ENCODE measurements at regions of chr12 and their contacts with region 1.

Region 1: DNA sequence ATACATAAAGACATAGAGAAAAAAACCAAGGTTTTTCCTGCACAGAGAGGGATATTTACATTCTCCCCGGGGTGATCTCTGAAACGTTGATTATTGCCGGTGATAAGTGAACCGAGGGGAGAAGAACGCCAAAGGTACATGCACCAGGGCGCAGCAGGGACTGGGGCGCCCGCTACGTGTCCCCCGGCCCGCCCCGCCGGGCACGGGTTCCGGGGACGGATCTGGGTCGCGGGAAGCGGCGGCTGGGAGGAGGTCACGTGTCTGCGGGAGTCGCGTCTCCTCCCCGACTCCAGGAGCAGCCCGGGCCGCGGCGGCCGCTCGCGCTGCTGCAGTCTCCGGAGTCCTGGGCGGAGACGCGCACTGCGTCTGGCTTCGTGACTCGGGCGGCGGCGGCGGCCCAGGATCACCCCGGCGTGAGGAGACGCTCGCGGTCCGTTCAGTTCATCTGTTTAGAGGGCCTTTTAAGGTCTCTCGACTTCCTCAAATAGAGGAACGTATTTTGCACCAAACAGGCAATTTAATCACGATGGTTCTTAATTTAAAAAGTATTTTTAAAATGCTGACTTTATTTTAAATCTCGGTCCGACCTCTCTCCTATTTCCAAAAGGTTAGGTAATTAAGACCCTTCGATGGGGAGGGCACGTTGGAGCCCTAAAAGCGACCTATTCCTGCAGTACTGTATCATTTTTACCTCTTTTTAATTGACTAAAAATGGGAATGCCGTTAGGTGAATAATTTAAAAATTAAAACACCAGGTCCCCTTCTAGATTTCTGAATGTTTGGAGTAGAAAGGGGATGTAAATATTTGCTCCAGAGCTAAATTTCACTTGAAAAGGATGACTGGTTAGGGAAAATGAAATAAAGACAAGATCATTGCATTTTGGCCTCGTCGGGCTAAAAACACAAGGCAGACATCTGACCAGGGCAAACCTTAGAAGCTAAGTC is 1.8 kb upstream of the BHLHE41 start:
- DNase-seq: peak; percentile 90 to 95 (median 91)
- ATAC-seq: peak; percentile 62 to 85 (median 80)
- H3K4me3 ChIP-seq: peak overlapping the region; percentile 38 to 84 (median 68)
- H3K27ac ChIP-seq: peak overlapping the region; percentile 76 to 98 (median 95)
- H3K4me1 ChIP-seq: peaks cover 0 to 26% (median 11%) of the 10 kb centered on the region in 12 donors
- H3K27me3 ChIP-seq: peaks cover 0 to 42% (median 0%) of the 10 kb centered on the region in 9 donors
- CTCF ChIP-seq: peak in 2 of 12 donors; percentile 29 to 31
- POLR2A ChIP-seq: no peak

Region 2: GRCh38 chr12:25979563-25979962 is 147.0 kb before region 1 on chr12:
- intact Hi-C with region 1: no loop called
- DNase-seq: no peak
- ATAC-seq: no peak
- H3K4me3 ChIP-seq: no peak overlapping the region
- H3K27ac ChIP-seq: no peak overlapping the region
- H3K4me1 ChIP-seq: peaks cover 0 to 60% (median 28%) of the 10 kb centered on the region in 12 donors
- H3K27me3 ChIP-seq: no peaks in the 10 kb centered on the region
- CTCF ChIP-seq: no peak
- POLR2A ChIP-seq: no peak

Region 3: GRCh38 chr12:26153421-26154154 is 27.0 kb after region 1 on chr12:
- intact Hi-C with region 1: loop called in 1 of 10 experiments (anchors 1 kb)
- DNase-seq: peak in 4 of 5 donors; percentile 15 to 46 (median 29)
- ATAC-seq: peak; percentile 88 to 98 (median 92)
- H3K4me3 ChIP-seq: no peak overlapping the region
- H3K27ac ChIP-seq: peak overlapping the region in 10 of 12 donors; percentile 8 to 72 (median 49)
- H3K4me1 ChIP-seq: peaks cover 0 to 34% (median 11%) of the 10 kb centered on the region in 12 donors
- H3K27me3 ChIP-seq: no peaks in the 10 kb centered on the region
- CTCF ChIP-seq: peak in 4 of 12 donors; percentile 10 to 30 (median 20)
- POLR2A ChIP-seq: no peak

Region 4: GRCh38 chr12:26274441-26275312 is 148.1 kb after region 1 on chr12:
- intact Hi-C with region 1: loop called in 5 of 10 experiments (anchors 5 to 10 kb)
- DNase-seq: peak; percentile 79 to 90 (median 85)
- ATAC-seq: peak; percentile 88 to 99 (median 97)
- H3K4me3 ChIP-seq: peak overlapping the region in 1 of 12 donors; percentile 7
- H3K27ac ChIP-seq: peak overlapping the region; percentile 68 to 90 (median 76)
- H3K4me1 ChIP-seq: peaks cover 10 to 67% (median 41%) of the 10 kb centered on the region in 12 donors
- H3K27me3 ChIP-seq: no peaks in the 10 kb centered on the region
- CTCF ChIP-seq: no peak
- POLR2A ChIP-seq: no peak

Region 5: GRCh38 chr12:26402648-26403047 is 276.0 kb after region 1 on chr12:
- intact Hi-C with region 1: loop called in 1 of 10 experiments (anchors 10 kb)
- DNase-seq: no peak
- ATAC-seq: peak in 2 of 4 donors; percentile 15 to 36
- H3K4me3 ChIP-seq: no peak overlapping the region
- H3K27ac ChIP-seq: no peak overlapping the region
- H3K4me1 ChIP-seq: no peaks in the 10 kb centered on the region
- H3K27me3 ChIP-seq: no peaks in the 10 kb centered on the region
- CTCF ChIP-seq: peak in 6 of 12 donors; percentile 2 to 28 (median 16)
- POLR2A ChIP-seq: no peak

Region 6: DNA sequence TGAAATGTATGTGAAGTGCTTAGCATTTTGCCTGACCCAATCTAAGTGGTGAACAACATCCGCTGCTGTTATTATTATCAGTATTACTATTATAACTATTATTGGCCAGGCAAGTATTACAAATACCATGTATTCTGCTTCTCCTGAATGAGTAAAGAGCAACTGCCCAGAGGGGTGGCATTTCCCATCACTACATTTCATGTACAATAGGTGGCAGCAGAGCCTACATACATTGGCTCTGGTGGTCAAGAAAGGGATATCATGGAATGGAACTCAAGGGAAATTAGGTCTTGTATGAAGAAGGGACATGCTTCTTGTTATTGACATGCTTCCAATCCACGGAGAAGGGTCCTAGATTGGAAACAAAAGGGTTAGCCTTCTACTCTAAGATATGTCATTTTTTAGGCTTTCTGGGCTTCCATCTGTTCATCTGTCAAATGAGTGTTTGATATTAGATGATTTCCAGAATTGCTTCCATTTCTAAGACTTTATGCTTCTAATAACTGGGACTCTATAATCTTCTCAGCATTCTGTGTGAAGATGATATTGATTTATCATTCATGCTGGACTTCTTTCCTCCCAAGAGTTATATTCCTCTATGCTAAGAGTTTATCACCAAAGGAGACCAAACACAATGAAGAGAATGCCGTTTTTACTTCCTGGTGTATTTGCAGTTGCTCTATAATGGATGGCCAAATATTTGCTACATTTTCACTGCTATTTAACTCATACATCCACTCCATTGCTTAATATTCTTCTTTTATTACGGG is 307.9 kb after region 1 on chr12:
- intact Hi-C with region 1: loop called in 2 of 10 experiments (anchors 10 kb)
- DNase-seq: no peak
- ATAC-seq: peak; percentile 58 to 76 (median 64)
- H3K4me3 ChIP-seq: no peak overlapping the region
- H3K27ac ChIP-seq: no peak overlapping the region
- H3K4me1 ChIP-seq: no peaks in the 10 kb centered on the region
- H3K27me3 ChIP-seq: no peaks in the 10 kb centered on the region
- CTCF ChIP-seq: peak; percentile 49 to 71 (median 62)
- POLR2A ChIP-seq: no peak

Region 7: DNA sequence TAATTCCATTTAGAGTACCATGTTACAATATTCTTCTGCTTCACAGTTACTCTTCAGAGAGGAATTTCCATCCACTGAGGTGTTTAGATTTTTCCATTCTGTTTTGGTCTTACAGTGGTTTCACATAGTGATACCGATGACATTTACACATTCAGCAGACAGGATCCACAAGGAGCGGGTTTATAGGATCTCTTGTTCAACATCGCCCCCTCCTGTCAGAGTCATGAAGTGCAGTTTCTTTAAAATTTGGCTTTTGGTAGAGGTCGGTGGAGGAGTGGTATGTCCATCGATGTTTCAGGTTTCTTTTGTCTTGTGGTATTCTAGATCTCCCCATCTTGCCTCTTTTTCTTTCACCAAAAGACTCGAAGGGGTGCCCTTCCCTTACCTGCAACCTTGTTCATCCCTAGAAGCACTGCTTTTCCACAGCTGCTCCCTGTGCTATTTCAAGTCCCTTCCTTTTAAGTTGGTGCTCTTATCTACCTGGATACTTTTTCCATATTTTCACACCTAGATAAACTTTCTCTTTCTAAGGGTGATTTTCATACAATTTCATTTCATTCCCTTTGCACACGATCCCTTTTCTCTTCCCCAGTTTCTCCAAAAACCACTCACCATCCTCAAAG is 525.1 kb after region 1 on chr12:
- intact Hi-C with region 1: loop called in 3 of 10 experiments (anchors 2 to 10 kb)
- DNase-seq: peak in 2 of 5 donors; percentile 26 to 39
- ATAC-seq: peak in 3 of 4 donors; percentile 65 to 80 (median 76)
- H3K4me3 ChIP-seq: no peak overlapping the region
- H3K27ac ChIP-seq: no peak overlapping the region
- H3K4me1 ChIP-seq: peaks cover 0 to 8% (median 0%) of the 10 kb centered on the region in 12 donors
- H3K27me3 ChIP-seq: no peaks in the 10 kb centered on the region
- CTCF ChIP-seq: peak; percentile 65 to 83 (median 78)
- POLR2A ChIP-seq: no peak

Measured in heart left ventricle (tissue), 16 donors.